Activated CD8-positive, alpha-beta T cell treated with anti-CD3 and anti-CD28 coated beads for 36 hours (primary cell): ENCODE measurements at regions of chr1 and their contacts with region 1.

Region 1: DNA sequence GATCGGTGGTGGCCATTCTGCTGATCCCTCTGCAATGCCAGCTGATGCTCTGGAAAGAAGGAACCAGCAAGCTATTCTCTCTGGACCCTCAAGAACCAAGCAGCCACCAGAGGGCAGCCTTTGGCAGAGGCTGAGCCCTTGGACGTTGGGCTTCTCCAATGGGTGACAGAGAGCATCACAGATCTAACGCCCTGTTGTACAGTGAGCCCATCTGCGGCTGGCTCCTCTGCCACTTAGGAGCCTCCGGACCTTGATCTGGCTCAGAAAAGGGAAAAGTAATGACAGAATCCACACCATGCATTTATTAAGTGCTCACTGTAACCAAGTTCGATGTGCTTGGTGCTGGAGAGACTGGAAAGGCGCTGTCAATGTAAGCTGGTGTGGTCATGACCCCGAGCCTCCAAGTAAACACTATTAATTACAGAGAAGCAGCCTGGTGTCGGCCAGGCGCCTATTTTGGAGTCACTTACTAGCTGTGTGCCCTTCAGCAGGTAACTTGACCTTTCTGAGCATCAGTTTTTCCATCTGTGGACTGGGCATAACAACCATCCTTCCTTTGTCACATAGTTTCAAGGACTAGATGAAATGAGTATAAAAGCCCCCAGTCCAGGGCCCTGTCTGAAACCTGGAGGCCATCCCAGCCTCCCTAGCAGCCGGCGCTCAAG is 34.9 kb downstream of the ECE1 start:
- DNase-seq: peak; percentile 92
- ATAC-seq: peak; percentile 45
- H3K4me3 Mint-ChIP-seq: no peak overlapping the region
- H3K27ac Mint-ChIP-seq: peak overlapping the region; percentile 87
- H3K4me1 Mint-ChIP-seq: peaks cover 58% of the 10 kb centered on the region
- H3K27me3 Mint-ChIP-seq: no peaks in the 10 kb centered on the region
- CTCF ChIP-seq: peak; percentile 85

Region 2: GRCh38 chr1:21077085-21077484 is 178.3 kb before region 1 on chr1:
- CTCF ChIA-PET with region 1: no interaction called
- POLR2A ChIA-PET with region 1: no interaction called
- intact Hi-C with region 1: no loop called
- DNase-seq: no peak
- ATAC-seq: no peak
- H3K4me3 Mint-ChIP-seq: no peak overlapping the region
- H3K27ac Mint-ChIP-seq: no peak overlapping the region
- H3K4me1 Mint-ChIP-seq: no peaks in the 10 kb centered on the region
- H3K27me3 Mint-ChIP-seq: no peaks in the 10 kb centered on the region
- CTCF ChIP-seq: no peak

Region 3: GRCh38 chr1:21200767-21201166 is 54.6 kb before region 1 on chr1:
- CTCF ChIA-PET with region 1: no interaction called
- POLR2A ChIA-PET with region 1: no interaction called
- intact Hi-C with region 1: no loop called
- DNase-seq: no peak
- ATAC-seq: no peak
- H3K4me3 Mint-ChIP-seq: no peak overlapping the region
- H3K27ac Mint-ChIP-seq: no peak overlapping the region
- H3K4me1 Mint-ChIP-seq: no peaks in the 10 kb centered on the region
- H3K27me3 Mint-ChIP-seq: peaks cover 4% of the 10 kb centered on the region
- CTCF ChIP-seq: no peak

Region 4: DNA sequence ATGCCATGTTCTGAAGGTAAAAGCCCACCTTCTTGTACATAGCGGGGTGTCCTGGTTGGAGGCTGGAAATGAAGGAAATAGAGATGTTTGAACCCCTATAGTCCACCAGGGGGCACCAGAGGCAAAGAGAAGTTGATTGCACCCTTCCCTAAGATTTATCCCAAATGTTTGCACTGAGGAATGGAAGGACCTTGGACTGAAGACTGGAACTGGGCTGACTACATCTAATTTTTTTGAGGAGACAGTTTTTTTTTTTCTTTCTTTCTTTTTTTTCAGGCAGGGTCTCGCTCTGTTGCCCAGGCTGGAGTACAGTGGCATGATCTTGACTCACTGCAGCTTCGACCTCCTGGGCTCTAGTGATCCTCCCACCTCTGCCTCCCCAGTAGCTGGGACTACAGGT is 23.4 kb before region 1 on chr1:
- CTCF ChIA-PET with region 1: interaction called, 12 read pairs
- POLR2A ChIA-PET with region 1: no interaction called
- intact Hi-C with region 1: no loop called
- DNase-seq: peak; percentile 38
- ATAC-seq: peak; percentile 64
- H3K4me3 Mint-ChIP-seq: no peak overlapping the region
- H3K27ac Mint-ChIP-seq: no peak overlapping the region
- H3K4me1 Mint-ChIP-seq: no peaks in the 10 kb centered on the region
- H3K27me3 Mint-ChIP-seq: no peaks in the 10 kb centered on the region
- CTCF ChIP-seq: peak; percentile 99

Region 5: GRCh38 chr1:21244986-21245687 is 10.3 kb before region 1 on chr1:
- CTCF ChIA-PET with region 1: interaction called, 28 read pairs
- POLR2A ChIA-PET with region 1: interaction called, 6 read pairs
- intact Hi-C with region 1: no loop called
- DNase-seq: no peak
- ATAC-seq: no peak
- H3K4me3 Mint-ChIP-seq: no peak overlapping the region
- H3K27ac Mint-ChIP-seq: no peak overlapping the region
- H3K4me1 Mint-ChIP-seq: peaks cover 2% of the 10 kb centered on the region
- H3K27me3 Mint-ChIP-seq: no peaks in the 10 kb centered on the region
- CTCF ChIP-seq: peak; percentile 43

Region 6: DNA sequence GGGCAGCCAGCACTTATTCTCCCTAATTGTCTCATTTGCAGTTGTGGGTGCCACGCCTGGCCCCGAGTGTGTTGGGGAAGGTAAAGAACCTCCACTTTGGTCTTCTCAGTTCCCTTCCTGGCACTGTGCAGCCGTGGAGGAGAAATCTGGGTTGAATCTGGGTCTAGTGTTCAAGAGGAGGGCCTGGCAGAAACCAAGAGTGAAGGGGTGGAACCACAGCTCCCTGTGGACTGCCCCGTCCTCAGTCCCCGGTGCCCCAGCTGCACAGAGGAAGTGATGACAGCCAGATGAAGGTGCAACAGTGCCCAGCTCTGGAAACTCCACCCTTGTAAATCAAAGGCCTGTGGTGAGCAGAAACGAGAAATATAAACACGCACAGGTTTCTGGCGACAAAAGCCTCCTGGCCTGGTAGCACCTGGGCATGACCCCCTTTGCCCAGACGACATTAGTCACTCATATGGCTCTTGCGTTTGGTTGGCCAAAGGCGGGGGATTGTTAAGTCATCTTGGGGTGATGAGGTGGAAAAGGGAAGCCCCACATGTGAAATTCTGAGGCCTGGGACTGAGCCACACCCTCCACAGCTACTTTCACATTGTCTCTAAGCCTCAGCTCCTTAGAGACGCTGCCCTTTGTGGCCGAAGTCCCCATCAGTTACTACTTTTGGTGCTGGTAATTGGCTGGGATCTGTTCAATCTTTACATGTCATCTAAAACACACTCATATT is 39.0 kb after region 1 on chr1:
- CTCF ChIA-PET with region 1: interaction called, 10 read pairs
- POLR2A ChIA-PET with region 1: interaction called, 27 read pairs
- intact Hi-C with region 1: loop called (anchors 5 kb)
- DNase-seq: peak; percentile 95
- ATAC-seq: peak; percentile 66
- H3K4me3 Mint-ChIP-seq: peak overlapping the region; percentile 63
- H3K27ac Mint-ChIP-seq: peak overlapping the region; percentile 95
- H3K4me1 Mint-ChIP-seq: peaks cover 85% of the 10 kb centered on the region
- H3K27me3 Mint-ChIP-seq: no peaks in the 10 kb centered on the region
- CTCF ChIP-seq: no peak

Region 7: DNA sequence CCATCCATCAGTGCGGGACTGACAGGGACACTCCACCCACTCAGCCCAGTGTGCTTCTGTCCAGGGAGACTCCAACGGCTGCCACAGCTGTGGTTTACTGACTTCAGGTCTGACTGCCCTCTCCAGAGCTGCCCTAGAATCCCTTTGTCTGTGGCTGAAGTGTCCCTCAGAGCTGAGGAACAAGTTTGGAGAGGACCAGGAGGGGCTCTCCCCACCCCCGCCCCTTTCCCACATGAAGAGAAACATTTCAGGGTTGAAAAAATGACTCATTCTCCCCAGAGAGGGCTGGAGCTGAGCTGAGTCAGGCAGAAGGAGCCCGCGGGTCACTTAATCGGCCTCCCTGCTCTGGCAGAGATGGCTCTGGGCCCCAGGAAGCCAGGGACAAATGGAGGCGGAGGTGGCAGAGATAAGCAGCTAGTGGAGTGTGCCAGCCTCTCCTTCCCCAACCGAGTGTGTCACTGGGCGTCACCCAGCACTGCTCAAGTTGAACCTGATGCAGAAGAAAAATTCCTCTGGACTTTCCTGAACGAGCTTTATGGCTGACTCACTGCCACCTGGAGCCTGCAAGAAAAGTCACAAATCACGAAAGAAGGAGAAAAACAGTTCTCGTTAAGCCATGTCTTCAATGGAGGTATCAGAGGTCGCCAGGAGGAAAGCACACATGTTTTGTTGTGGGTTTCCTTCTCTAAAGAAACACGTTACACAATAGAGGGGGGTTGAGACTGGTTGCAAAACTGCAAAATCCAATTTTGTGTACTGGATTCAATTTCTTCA is 69.1 kb after region 1 on chr1:
- CTCF ChIA-PET with region 1: interaction called, 15 read pairs
- POLR2A ChIA-PET with region 1: interaction called, 3 read pairs
- intact Hi-C with region 1: no loop called
- DNase-seq: peak; percentile 91
- ATAC-seq: peak; percentile 86
- H3K4me3 Mint-ChIP-seq: peak overlapping the region; percentile 56
- H3K27ac Mint-ChIP-seq: peak overlapping the region; percentile 94
- H3K4me1 Mint-ChIP-seq: peaks cover 84% of the 10 kb centered on the region
- H3K27me3 Mint-ChIP-seq: no peaks in the 10 kb centered on the region
- CTCF ChIP-seq: no peak

Region 8: DNA sequence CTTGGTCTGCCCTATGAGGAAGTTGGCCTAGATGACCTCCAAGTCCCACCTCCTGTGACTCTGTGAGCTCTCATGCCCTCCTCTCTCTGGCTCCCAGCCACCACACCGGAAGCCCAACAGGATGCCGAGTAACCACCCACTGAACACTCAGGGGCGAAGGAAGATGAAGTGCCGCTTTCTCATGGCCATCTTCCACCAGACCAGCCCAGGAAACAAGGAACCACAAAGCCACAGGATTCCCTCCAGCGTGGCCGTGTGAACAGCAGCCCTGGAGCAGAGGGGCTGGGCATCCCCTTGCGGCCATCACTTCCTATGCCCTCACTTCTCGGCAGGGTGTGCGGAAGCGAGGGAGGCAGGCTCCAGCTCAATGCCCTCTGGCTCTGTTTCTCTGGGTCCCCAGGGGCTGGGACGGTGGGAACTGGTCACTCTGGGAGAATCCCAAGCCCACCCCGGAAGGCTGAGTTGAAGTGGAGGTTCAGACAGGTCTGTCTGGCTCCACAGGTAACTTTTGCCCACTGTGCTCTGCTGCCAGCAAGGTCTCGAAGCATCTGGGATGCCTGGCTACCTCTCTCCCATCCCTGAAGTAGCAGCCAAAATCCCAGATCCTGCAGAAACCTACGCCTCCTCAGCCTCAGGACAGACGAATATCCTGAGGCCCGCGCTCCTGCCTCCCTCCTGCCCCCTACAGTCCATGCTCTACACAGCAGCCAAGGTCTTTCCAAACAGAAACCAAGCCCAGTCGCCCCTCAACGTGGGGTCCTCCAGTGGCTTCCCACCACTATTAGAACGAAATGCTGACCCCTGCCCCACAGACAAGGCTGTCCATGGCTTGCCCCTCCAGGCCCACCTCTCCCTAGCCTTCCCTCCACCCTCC is 79.0 kb after region 1 on chr1:
- CTCF ChIA-PET with region 1: interaction called, 14 read pairs
- POLR2A ChIA-PET with region 1: no interaction called
- intact Hi-C with region 1: no loop called
- DNase-seq: peak; percentile 90
- ATAC-seq: peak; percentile 90
- H3K4me3 Mint-ChIP-seq: peak overlapping the region; percentile 76
- H3K27ac Mint-ChIP-seq: peak overlapping the region; percentile 96
- H3K4me1 Mint-ChIP-seq: peaks cover 87% of the 10 kb centered on the region
- H3K27me3 Mint-ChIP-seq: no peaks in the 10 kb centered on the region
- CTCF ChIP-seq: peak; percentile 83

Region 9: DNA sequence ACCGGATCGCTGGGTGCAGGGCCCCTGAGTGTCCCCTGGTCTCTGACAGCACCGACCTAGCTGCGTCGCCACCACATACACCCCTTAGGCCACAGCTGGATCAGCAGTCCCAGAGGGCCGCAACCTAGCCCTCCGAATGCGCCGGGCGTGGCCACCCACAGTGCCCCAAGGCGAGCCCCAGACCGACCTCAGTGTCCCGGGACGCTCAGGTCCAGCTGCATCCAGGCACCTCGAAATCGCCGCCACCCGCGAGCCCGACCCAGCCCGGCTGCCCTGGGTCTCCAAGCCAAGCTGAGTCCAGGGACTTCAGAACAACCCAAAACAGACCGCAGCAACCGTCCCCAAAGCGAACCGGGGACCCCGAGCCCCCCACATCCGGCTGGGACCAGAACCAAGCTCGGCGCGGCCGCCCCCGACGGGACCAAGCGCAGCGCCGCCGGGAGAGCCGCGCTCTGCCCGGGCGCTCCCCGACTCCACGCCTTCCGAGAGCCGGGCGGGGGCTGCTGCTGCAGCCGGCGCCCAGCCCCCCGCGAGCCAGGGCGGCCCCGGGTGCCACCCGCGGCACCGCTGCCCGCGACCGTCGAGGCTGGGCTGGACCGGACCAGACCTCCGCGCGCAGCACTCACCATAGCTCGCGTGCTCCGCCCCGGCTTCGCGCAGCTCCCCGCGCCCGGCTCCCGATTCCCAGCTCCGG is 89.5 kb after region 1 on chr1:
- CTCF ChIA-PET with region 1: interaction called, 8 read pairs
- POLR2A ChIA-PET with region 1: interaction called, 11 read pairs
- intact Hi-C with region 1: no loop called
- DNase-seq: peak; percentile 35
- ATAC-seq: peak; percentile 11
- H3K4me3 Mint-ChIP-seq: peak overlapping the region; percentile 82
- H3K27ac Mint-ChIP-seq: peak overlapping the region; percentile 95
- H3K4me1 Mint-ChIP-seq: peaks cover 38% of the 10 kb centered on the region
- H3K27me3 Mint-ChIP-seq: no peaks in the 10 kb centered on the region
- CTCF ChIP-seq: no peak

Region 10: DNA sequence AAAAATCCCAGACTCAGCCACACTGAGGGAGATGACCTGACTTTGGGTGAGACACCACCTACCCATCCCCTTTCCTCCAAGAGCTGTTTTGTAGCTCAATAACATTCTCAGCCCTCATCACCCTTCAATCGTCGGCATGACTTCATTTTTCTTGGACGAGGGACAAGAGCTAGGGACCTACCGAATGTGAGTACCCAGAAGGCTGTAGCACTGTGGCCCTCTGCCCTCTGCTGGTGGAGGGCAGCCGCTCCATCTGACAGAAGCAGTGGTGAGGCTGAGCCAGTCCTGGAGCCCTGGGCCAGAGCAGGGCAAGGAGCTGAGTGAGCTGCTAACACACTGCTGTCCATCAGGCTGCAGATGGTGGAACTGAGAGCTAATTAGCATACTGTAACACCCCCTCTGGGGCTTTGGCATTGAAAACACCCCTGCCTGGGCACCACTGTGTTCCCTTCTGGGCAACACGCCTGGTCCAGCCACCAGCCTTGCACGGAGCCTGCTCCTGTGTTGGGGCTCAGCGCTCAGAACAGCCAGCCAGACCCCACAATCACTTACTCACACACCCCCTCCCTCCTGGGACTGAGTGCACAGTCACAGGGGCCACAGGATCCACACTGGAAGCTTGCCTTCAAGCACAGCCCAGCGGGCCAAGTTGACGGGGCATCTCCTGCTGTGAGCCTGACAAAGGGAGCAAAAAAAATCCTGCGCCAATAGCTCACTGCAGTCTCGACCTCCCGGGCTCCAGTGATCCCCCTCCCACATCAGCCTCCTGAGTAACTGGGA is 235.6 kb after region 1 on chr1:
- CTCF ChIA-PET with region 1: no interaction called
- POLR2A ChIA-PET with region 1: no interaction called
- intact Hi-C with region 1: no loop called
- DNase-seq: peak; percentile 57
- ATAC-seq: peak; percentile 69
- H3K4me3 Mint-ChIP-seq: no peak overlapping the region
- H3K27ac Mint-ChIP-seq: no peak overlapping the region
- H3K4me1 Mint-ChIP-seq: peaks cover 7% of the 10 kb centered on the region
- H3K27me3 Mint-ChIP-seq: peaks cover 8% of the 10 kb centered on the region
- CTCF ChIP-seq: peak; percentile 56